CD14-positive monocyte (primary cell): ENCODE measurements at regions of chr16 and their contacts with region 1.

Region 1: GRCh38 chr16:3150346-3151218 is 15.8 kb downstream of the ZNF213 start:
- DNase-seq: peak; percentile 91 to 97 (median 92)
- H3K4me3 ChIP-seq: peak overlapping the region; percentile 65 to 93 (median 74)
- H3K4me3 Mint-ChIP-seq: peak overlapping the region; percentile 87 to 92
- H3K27ac ChIP-seq: peak overlapping the region; percentile 51 to 53
- H3K27ac Mint-ChIP-seq: peak overlapping the region; percentile 71 to 88 (median 80)
- H3K4me1 ChIP-seq: peaks cover 33 to 38% of the 10 kb centered on the region in 2 donors
- H3K4me1 Mint-ChIP-seq: peaks cover 31% of the 10 kb centered on the region
- H3K27me3 ChIP-seq: peaks cover 4 to 41% of the 10 kb centered on the region in 2 donors
- H3K27me3 Mint-ChIP-seq: peaks cover 38 to 55% (median 48%) of the 10 kb centered on the region in 3 donors
- CTCF ChIP-seq: no peak

Region 2: GRCh38 chr16:3106205-3106928 is 44.2 kb before region 1 on chr16:
- intact Hi-C with region 1: loop called in 1 of 2 experiments (anchors 10 kb)
- DNase-seq: peak; percentile 74 to 87 (median 85)
- H3K4me3 ChIP-seq: peak overlapping the region; percentile 55 to 87 (median 59)
- H3K4me3 Mint-ChIP-seq: peak overlapping the region; percentile 80 to 88
- H3K27ac ChIP-seq: peak overlapping the region in 1 of 2 donors; percentile 75
- H3K27ac Mint-ChIP-seq: peak overlapping the region in 2 of 7 donors; percentile 7 to 37
- H3K4me1 ChIP-seq: peaks cover 25 to 29% of the 10 kb centered on the region in 2 donors
- H3K4me1 Mint-ChIP-seq: peaks cover 24% of the 10 kb centered on the region
- H3K27me3 ChIP-seq: no peaks in the 10 kb centered on the region
- H3K27me3 Mint-ChIP-seq: peaks cover 6 to 7% (median 7%) of the 10 kb centered on the region in 3 donors
- CTCF ChIP-seq: no peak

Region 3: GRCh38 chr16:3134564-3135417 is 15.8 kb before region 1 on chr16 and contains the start of gene ZNF213:
- intact Hi-C with region 1: loop called in 1 of 2 experiments (anchors 2 kb)
- DNase-seq: peak; percentile 94 to 96 (median 96)
- H3K4me3 ChIP-seq: peak within 1 kb of the TSS; percentile 89 to 98 (median 94)
- H3K4me3 Mint-ChIP-seq: peak within 1 kb of the TSS; percentile 97 to 98
- H3K27ac ChIP-seq: peak within 1 kb of the TSS; percentile 91 to 93
- H3K27ac Mint-ChIP-seq: peak within 1 kb of the TSS; percentile 91 to 98 (median 98)
- H3K4me1 ChIP-seq: peaks cover 26 to 33% of the 10 kb centered on the region in 2 donors
- H3K4me1 Mint-ChIP-seq: peaks cover 31% of the 10 kb centered on the region
- H3K27me3 ChIP-seq: no peaks in the 10 kb centered on the region
- H3K27me3 Mint-ChIP-seq: peaks cover 0 to 2% (median 0%) of the 10 kb centered on the region in 3 donors
- CTCF ChIP-seq: no peak
- polyA plus RNA-seq, gene ZNF213: 1.5 to 2.6 (median 1.8) TPM

Region 4: DNA sequence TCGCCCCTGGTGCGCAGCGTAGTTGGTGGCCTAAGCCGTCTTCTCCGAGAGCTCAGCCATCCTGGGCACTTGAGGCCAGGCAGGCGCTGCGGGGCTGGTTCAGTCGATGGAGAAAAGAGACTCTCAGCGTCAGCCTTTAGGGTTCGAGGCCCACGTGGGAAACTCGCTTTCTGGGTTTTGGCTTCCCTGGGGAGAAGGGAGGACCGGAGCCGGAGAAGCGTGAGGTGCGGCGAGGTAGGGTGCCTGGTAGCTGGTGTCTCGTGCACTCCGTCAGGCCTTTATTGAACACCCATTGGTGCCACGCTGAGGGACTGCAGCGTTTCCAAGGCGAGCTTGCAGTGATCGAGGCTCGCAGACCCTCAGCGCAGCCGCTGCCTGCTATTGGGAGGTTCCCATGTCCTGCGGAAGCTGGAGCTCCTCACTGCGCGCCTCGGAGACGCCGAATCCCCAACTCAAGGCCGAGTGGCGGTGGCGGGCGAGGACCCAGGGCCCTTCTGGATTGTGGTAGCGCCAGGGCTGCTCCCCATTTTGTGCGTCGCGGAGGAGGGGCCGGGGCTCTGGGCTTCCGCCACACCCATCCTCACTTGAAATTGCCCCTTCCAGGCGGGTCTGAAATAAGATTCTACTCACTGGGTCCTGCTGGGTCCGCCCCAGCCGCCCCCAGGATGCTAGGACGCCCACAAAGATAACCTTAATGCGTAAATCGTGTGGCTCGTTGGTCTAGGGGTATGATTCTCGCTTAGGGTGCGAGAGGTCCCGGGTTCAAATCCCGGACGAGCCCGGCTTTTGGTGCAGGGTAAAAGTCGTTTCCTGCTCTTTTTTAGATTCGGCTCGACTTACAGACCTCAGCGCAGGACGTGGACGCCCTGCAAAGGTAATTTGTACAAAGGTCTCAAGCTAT is 38.6 kb after region 1 on chr16:
- intact Hi-C with region 1: no loop called
- DNase-seq: no peak
- H3K4me3 ChIP-seq: no peak overlapping the region
- H3K4me3 Mint-ChIP-seq: peak overlapping the region; percentile 39 to 83
- H3K27ac ChIP-seq: no peak overlapping the region
- H3K27ac Mint-ChIP-seq: no peak overlapping the region
- H3K4me1 ChIP-seq: peaks cover 17 to 20% of the 10 kb centered on the region in 2 donors
- H3K4me1 Mint-ChIP-seq: peaks cover 31% of the 10 kb centered on the region
- H3K27me3 ChIP-seq: peaks cover 82 to 99% of the 10 kb centered on the region in 2 donors
- H3K27me3 Mint-ChIP-seq: peaks cover 91 to 100% (median 98%) of the 10 kb centered on the region in 3 donors
- CTCF ChIP-seq: no peak